Activated CD8-positive, alpha-beta T cell treated with anti-CD3 and anti-CD28 coated beads for 36 hours (primary cell): ENCODE measurements at regions of chr11 and their contacts with region 1.

Region 1: GRCh38 chr11:86047275-86047991 is 21.5 kb downstream of the PICALM start:
- DNase-seq: peak; percentile 76
- ATAC-seq: peak; percentile 71
- H3K4me3 Mint-ChIP-seq: peak overlapping the region; percentile 37
- H3K27ac Mint-ChIP-seq: peak overlapping the region; percentile 92
- H3K4me1 Mint-ChIP-seq: peaks cover 86% of the 10 kb centered on the region
- H3K27me3 Mint-ChIP-seq: no peaks in the 10 kb centered on the region
- CTCF ChIP-seq: no peak

Region 2: GRCh38 chr11:86116386-86116726 is 68.9 kb after region 1 on chr11:
- CTCF ChIA-PET with region 1: interaction called, 6 read pairs
- POLR2A ChIA-PET with region 1: no interaction called
- intact Hi-C with region 1: loop called (anchors 5 kb)
- DNase-seq: peak; percentile 62
- ATAC-seq: peak; percentile 91
- H3K4me3 Mint-ChIP-seq: peak overlapping the region; percentile 41
- H3K27ac Mint-ChIP-seq: peak overlapping the region; percentile 84
- H3K4me1 Mint-ChIP-seq: peaks cover 29% of the 10 kb centered on the region
- H3K27me3 Mint-ChIP-seq: peaks cover 3% of the 10 kb centered on the region
- CTCF ChIP-seq: no peak